K562 (cell line): ENCODE measurements at regions of chr3 and their contacts with region 1.

Region 1: DNA sequence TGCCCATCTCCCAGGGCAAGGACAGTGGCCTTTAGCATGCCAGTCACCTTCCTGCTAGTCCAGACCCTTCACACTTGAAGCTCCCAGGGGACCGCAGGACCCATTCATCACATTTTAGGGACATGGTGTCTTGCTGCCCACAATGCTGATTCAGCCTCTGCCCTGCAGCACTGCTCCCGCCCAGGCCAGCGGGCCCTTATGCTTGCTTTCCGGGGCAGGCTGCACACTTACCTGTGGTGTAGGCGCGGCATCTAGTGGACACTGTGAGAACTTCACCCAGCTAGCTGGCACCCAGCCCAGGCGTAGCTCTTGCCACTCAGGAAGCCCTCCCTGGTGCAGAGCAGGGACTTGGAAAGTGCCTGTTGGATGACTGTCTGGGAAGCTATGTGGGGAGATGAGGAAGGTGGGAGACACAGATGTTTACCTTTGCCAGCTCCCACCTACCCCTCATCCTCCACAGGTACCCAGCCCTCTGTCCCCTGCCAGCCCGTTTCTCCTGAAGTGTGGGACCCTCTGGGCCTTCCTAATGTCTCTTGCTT is 26.2 kb upstream of the NR2C2 start:
- DNase-seq: peak; percentile 83 to 91 (median 88)
- ATAC-seq: peak; percentile 87
- H3K4me3 ChIP-seq: no peak overlapping the region
- H3K27ac ChIP-seq: no peak overlapping the region
- H3K4me1 ChIP-seq: peaks cover 0 to 3% of the 10 kb centered on the region in 2 experiments; a peak in 2 of 5 replicates
- H3K27me3 ChIP-seq: peaks cover 47 to 62% of the 10 kb centered on the region in 2 experiments
- CTCF ChIP-seq: peak; percentile 95 to 98 (median 98)
- EP300 ChIP-seq: no peak
- POLR2A ChIP-seq: no peak
- RAD21 ChIP-seq: peak; percentile 97 to 98

Region 2: DNA sequence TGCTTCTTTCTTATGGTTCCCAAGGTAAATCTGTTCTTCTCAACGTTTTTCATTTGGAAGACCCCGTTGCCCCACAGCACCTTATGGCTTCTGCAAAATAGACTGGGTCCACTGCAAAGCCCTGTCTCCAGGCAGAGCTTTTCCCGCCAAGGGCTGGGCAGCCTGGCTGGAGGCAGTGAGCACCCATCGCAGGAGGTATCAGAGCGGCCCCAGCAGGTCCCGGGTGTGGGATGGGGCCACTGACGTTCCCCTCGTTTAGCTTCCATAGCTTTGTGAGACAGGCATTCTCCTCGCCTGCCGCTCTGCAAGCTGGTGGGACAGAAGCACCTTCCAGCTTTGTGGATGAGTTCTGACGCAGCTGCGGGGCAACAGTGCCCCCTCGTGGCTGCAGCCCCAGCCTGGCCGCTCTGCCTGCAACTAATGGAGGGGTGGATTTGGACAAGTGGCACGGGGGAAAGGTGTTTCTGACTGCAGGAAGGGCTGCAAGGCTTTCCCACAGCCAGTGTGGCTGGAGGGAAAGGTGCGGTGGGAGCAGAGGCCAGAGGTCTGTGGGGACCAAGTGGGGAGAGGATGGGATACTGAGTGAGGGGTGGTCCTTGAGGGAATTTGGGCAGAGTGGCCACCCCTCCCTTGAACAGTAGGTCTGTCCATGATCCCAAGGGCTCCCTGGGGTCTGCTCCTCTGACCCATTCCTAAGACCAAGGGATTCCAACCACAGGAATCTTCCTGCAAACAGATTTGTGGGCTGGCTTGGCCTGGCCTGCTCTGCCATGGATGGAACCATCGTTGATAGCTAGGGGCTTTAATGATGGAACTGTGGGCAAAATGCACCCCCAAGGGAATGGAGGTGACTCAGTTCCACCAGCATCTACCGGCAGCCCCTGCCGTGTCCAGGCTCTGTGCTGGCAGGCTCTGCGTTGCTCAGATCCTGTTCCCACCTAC is 1272.8 kb before region 1 on chr3:
- CTCF ChIA-PET with region 1: no interaction called
- POLR2A ChIA-PET with region 1: no interaction called
- in situ Hi-C with region 1: loop called (anchors 25 kb)
- intact Hi-C with region 1: no loop called
- DNase-seq: peak; percentile 89 to 93 (median 92)
- ATAC-seq: peak; percentile 76
- H3K4me3 ChIP-seq: no peak overlapping the region
- H3K27ac ChIP-seq: no peak overlapping the region
- H3K4me1 ChIP-seq: peaks cover 25 to 37% of the 10 kb centered on the region in 2 experiments; a peak in 4 of 5 replicates
- H3K27me3 ChIP-seq: peaks cover 20 to 41% of the 10 kb centered on the region in 2 experiments
- CTCF ChIP-seq: peak; percentile 97 to 100 (median 99)
- EP300 ChIP-seq: no peak
- POLR2A ChIP-seq: no peak
- RAD21 ChIP-seq: peak; percentile 99 to 100

Region 3: DNA sequence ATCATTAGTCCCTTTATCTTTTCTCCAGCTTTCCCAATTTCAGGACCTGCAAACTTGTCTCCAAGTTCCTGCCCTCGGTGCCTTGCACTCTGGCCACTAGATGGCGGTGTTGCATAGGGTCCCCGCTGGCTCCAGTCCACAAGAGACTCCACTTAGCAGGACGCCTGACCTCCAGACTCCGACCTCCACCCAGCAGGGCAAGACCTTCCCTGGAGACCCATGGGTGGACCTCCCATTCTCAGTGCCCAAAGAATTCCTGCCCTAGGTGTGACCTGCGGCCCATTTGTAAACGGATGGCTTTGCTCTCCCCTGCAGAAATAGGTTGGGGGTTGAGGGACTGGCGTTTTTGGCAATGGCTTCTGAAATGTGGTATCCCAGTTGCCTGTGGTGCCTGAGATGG is 659.9 kb before region 1 on chr3:
- CTCF ChIA-PET with region 1: no interaction called
- POLR2A ChIA-PET with region 1: no interaction called
- in situ Hi-C with region 1: no loop called
- intact Hi-C with region 1: loop called (anchors 5 kb)
- DNase-seq: peak; percentile 92 to 96 (median 94)
- ATAC-seq: peak; percentile 90
- H3K4me3 ChIP-seq: no peak overlapping the region
- H3K27ac ChIP-seq: no peak overlapping the region
- H3K4me1 ChIP-seq: peaks cover 20 to 25% of the 10 kb centered on the region in 2 experiments
- H3K27me3 ChIP-seq: no peaks in the 10 kb centered on the region
- CTCF ChIP-seq: peak; percentile 96 to 99 (median 99)
- EP300 ChIP-seq: peak; percentile 46; the same call in 1 of the 2 replicates
- POLR2A ChIP-seq: no peak
- RAD21 ChIP-seq: peak; percentile 99

Region 4: GRCh38 chr3:14672588-14672987 is 248.6 kb before region 1 on chr3:
- CTCF ChIA-PET with region 1: interaction called, 4 read pairs
- POLR2A ChIA-PET with region 1: interaction called, 3 read pairs
- in situ Hi-C with region 1: no loop called
- intact Hi-C with region 1: loop called (anchors 2 kb)
- DNase-seq: no peak
- ATAC-seq: no peak
- H3K4me3 ChIP-seq: no peak overlapping the region
- H3K27ac ChIP-seq: no peak overlapping the region
- H3K4me1 ChIP-seq: no peaks in the 10 kb centered on the region
- H3K27me3 ChIP-seq: no peaks in the 10 kb centered on the region
- CTCF ChIP-seq: no peak
- EP300 ChIP-seq: no peak
- POLR2A ChIP-seq: no peak
- RAD21 ChIP-seq: no peak

Region 5: DNA sequence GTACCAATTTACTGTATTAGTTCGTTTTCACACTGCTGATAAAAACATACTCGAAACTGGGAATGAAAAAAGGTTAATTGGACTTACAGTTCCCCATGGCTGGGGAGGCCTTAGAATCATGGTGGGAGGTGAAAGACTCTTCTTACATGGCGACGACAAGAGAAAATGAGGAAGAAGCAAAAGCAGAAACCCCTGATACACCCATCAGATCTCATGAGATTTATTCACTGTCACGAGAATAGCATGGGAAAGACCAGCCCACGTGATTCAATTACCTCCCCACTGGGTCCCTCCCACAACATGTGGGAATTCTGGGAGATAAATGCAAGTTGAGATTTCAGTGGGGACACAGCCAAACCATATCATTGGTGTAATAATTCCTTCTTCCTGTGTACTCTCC is 176.6 kb before region 1 on chr3:
- CTCF ChIA-PET with region 1: no interaction called
- POLR2A ChIA-PET with region 1: no interaction called
- in situ Hi-C with region 1: no loop called
- intact Hi-C with region 1: no loop called
- DNase-seq: no peak
- ATAC-seq: no peak
- H3K4me3 ChIP-seq: no peak overlapping the region
- H3K27ac ChIP-seq: no peak overlapping the region
- H3K4me1 ChIP-seq: no peaks in the 10 kb centered on the region
- H3K27me3 ChIP-seq: no peaks in the 10 kb centered on the region
- CTCF ChIP-seq: no peak
- EP300 ChIP-seq: no peak
- POLR2A ChIP-seq: no peak
- RAD21 ChIP-seq: no peak

Region 6: DNA sequence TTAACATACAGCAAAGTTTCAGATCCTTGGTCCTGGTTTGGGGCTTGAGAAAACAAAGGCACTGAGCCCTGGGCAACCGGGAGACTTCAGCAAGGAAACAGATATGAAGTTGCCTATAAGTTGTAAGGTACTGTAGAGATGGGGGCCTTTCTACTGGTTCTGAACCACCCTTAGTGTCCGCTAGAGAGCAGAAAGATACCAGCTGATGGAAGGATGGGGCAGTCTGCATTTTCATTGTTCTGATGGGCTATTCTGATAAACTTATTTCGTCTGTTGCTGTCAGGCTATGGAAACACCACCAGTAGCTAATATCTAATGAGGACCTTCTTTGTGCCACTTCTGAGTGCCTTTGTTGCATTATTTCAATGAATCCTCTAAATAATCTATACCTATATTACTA is 63.6 kb before region 1 on chr3:
- CTCF ChIA-PET with region 1: interaction called, 3 read pairs
- POLR2A ChIA-PET with region 1: interaction called, 3 read pairs
- in situ Hi-C with region 1: no loop called
- intact Hi-C with region 1: loop called (anchors 2 kb)
- DNase-seq: no peak
- ATAC-seq: peak; percentile 66
- H3K4me3 ChIP-seq: no peak overlapping the region
- H3K27ac ChIP-seq: no peak overlapping the region
- H3K4me1 ChIP-seq: no peaks in the 10 kb centered on the region
- H3K27me3 ChIP-seq: peaks cover 11 to 29% of the 10 kb centered on the region in 2 experiments
- CTCF ChIP-seq: peak; percentile 23 to 51 (median 32); a peak in 3 of 6 replicates
- EP300 ChIP-seq: no peak
- POLR2A ChIP-seq: no peak
- RAD21 ChIP-seq: peak; percentile 71 to 85

Region 7: DNA sequence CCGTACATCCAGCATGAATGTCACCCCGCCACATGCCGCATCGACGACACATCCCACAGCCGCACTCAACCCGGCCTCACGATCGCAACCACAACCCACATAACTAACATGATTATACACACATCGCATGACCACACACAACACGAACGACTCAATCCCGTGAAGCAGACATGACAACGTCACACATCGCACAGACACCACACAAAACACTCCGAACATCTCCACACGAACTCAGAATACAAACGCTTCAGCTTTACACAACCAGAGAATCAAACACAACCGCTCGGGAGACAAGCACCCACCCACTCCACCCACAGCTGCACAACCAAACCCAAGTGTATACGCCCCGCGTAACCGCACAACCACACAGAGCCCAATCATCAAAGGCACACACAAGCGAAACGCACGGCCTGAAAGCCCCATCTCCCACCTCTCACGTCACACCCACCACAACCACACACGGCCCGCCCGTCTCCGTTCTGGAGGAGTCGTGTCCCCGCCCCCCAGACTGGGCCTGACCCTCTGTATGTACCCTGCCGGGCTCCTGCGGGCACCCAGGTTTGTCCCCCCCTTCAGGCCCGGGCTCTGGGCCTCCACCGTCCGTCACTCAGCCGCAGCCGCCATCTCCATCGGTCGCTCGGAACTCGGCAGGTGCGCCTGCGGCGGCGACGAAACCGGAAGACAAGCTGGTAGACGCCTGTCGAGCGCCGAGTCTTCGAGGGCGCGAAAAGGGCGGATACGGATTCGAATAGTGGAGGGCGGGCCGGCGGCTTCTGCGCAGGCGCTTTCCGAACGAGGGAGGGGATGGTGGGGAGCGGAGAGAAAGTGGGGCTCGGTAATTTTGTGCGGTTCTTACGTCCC is 177.6 kb after region 1 on chr3 and contains the start of gene RBSN:
- CTCF ChIA-PET with region 1: no interaction called
- POLR2A ChIA-PET with region 1: no interaction called
- in situ Hi-C with region 1: no loop called
- intact Hi-C with region 1: loop called (anchors 1 kb)
- DNase-seq: peak; percentile 96 to 99 (median 97)
- ATAC-seq: peak; percentile 93
- H3K4me3 ChIP-seq: peak within 1 kb of the TSS; percentile 80
- H3K27ac ChIP-seq: peak within 1 kb of the TSS; percentile 78
- H3K4me1 ChIP-seq: peaks cover 16 to 24% of the 10 kb centered on the region in 2 experiments
- H3K27me3 ChIP-seq: no peaks in the 10 kb centered on the region
- CTCF ChIP-seq: peak in 2 of 3 experiments; percentile 2 to 17; a peak in 1 of 6 replicates
- EP300 ChIP-seq: peak; percentile 76
- POLR2A ChIP-seq: peak; percentile 91
- RAD21 ChIP-seq: peak in 1 of 2 experiments; percentile 21; a peak in 1 of 4 replicates
- polyA plus RNA-seq, gene RBSN: 2.9 to 4.2 TPM

Region 8: DNA sequence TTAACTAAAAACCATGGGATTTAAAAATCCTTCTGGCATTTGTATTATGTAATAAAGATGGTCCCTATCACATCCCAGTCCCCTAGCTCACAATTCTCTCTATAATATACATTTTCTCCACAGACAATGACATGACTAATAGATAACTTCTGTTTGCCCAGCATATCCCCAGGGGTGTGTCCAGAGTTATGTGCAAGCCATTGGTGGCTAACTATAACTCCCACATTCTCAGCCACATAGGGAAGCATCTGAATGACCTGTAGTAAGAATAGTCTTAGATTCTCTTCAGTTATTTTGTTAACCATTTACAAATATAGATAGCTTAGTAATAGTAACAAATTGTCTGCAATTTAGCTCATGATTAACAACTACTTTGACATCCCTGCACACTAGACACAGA is 230.0 kb after region 1 on chr3:
- CTCF ChIA-PET with region 1: no interaction called
- POLR2A ChIA-PET with region 1: no interaction called
- in situ Hi-C with region 1: no loop called
- intact Hi-C with region 1: no loop called
- DNase-seq: peak in 2 of 4 experiments; percentile 21 to 23
- ATAC-seq: 0 out of 3 replicates have a peak, but pooled peaks have one; percentile 15
- H3K4me3 ChIP-seq: no peak overlapping the region
- H3K27ac ChIP-seq: no peak overlapping the region
- H3K4me1 ChIP-seq: peaks cover 0 to 2% of the 10 kb centered on the region in 2 experiments; a peak in 1 of 5 replicates
- H3K27me3 ChIP-seq: peaks cover 17 to 19% of the 10 kb centered on the region in 2 experiments; a peak in 4 of 5 replicates
- CTCF ChIP-seq: no peak
- EP300 ChIP-seq: no peak
- POLR2A ChIP-seq: no peak
- RAD21 ChIP-seq: no peak

Region 9: GRCh38 chr3:15405448-15406050 is 484.4 kb after region 1 on chr3:
- CTCF ChIA-PET with region 1: no interaction called
- POLR2A ChIA-PET with region 1: interaction called, 3 read pairs
- in situ Hi-C with region 1: no loop called
- intact Hi-C with region 1: loop called (anchors 5 kb)
- DNase-seq: peak; percentile 62 to 76 (median 63)
- ATAC-seq: peak; percentile 89
- H3K4me3 ChIP-seq: no peak overlapping the region
- H3K27ac ChIP-seq: no peak overlapping the region
- H3K4me1 ChIP-seq: no peaks in the 10 kb centered on the region
- H3K27me3 ChIP-seq: no peaks in the 10 kb centered on the region
- CTCF ChIP-seq: peak; percentile 62 to 88 (median 72)
- EP300 ChIP-seq: no peak
- POLR2A ChIP-seq: no peak
- RAD21 ChIP-seq: peak; percentile 77 to 92

Region 10: GRCh38 chr3:15831930-15832329 is 910.8 kb after region 1 on chr3:
- CTCF ChIA-PET with region 1: no interaction called
- POLR2A ChIA-PET with region 1: no interaction called
- in situ Hi-C with region 1: no loop called
- intact Hi-C with region 1: no loop called
- DNase-seq: no peak
- ATAC-seq: no peak
- H3K4me3 ChIP-seq: no peak overlapping the region
- H3K27ac ChIP-seq: no peak overlapping the region
- H3K4me1 ChIP-seq: no peaks in the 10 kb centered on the region
- H3K27me3 ChIP-seq: no peaks in the 10 kb centered on the region
- CTCF ChIP-seq: no peak
- EP300 ChIP-seq: no peak
- POLR2A ChIP-seq: no peak
- RAD21 ChIP-seq: no peak